GM12878 (cell line): ENCODE measurements at regions of chr5 and their contacts with region 1.

Region 1: DNA sequence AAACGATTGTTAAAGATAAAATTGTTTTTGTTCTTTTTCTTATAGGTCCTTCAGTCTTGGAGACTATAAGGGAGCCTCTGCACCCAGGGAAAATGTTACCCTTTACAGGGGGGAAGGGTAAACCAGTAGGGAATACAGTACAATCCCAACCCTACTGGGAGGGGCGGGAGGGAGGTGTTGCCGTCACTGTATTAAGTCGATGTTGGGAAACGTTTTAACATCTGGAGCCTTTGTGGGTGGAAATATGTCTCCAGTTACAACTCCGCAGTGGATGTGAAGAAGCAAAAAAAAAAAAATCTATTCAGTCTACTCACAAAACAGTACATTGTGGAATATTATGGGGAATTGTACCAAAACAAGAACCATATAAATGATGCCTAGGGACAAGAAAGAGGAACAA is 47.2 kb upstream of the FCHO2 start:
- DNase-seq: no peak
- ATAC-seq: no peak
- H3K4me3 ChIP-seq: no peak overlapping the region
- H3K27ac ChIP-seq: no peak overlapping the region
- H3K4me1 ChIP-seq: no peaks in the 10 kb centered on the region
- H3K27me3 ChIP-seq: no peaks in the 10 kb centered on the region
- CTCF ChIP-seq: no peak
- EP300 ChIP-seq: no peak
- POLR2A ChIP-seq: no peak
- RAD21 ChIP-seq: no peak

Region 2: GRCh38 chr5:72920690-72921502 is 12.2 kb after region 1 on chr5:
- CTCF ChIA-PET with region 1: no interaction called
- POLR2A ChIA-PET with region 1: no interaction called
- RAD21 ChIA-PET with region 1: no interaction called
- SMC1A ChIA-PET with region 1: no interaction called
- in situ Hi-C with region 1: no loop called
- intact Hi-C with region 1: loop called (anchors 1 kb)
- DNase-seq: no peak
- ATAC-seq: peak; percentile 35; the same call in 1 of the 3 replicates
- H3K4me3 ChIP-seq: no peak overlapping the region
- H3K27ac ChIP-seq: no peak overlapping the region
- H3K4me1 ChIP-seq: no peaks in the 10 kb centered on the region
- H3K27me3 ChIP-seq: no peaks in the 10 kb centered on the region
- CTCF ChIP-seq: no peak; a peak in 1 of 6 replicates
- EP300 ChIP-seq: no peak
- POLR2A ChIP-seq: no peak
- RAD21 ChIP-seq: peak; percentile 31; the same call in 1 of the 2 replicates